ENCODE measurements at regions of chr6 and their contacts with region 1.

Region 1: DNA sequence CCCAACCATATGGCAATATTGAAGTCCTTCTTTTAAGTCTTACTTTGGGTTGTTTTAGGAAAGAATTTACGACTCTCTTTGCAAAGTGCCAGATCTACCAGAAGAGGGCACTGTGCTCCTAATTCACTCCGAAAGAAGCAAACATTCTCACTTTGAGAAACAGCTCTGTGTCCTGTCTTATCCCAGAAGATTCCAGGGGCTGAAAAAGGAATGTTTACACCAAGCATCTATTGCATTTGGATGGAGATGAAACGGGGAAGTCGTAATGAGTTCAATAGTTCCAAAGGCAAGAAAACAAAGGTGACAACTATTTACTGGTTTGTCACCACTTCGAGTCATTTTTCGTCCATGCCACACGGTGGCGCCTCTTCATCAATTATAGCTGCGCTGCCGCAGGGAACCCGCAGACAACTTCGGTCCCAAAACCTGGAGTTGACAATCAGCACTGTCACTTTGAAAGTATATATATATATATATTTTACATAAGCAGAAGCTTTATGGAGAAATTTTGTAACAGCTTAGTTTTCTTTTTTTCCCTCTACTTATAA is 121.6 kb downstream of the MOXD1 start:
- DNase-seq: peak; percentile 33 to 65
- ATAC-seq: peak; percentile 84 to 86; a peak in 5 of 6 replicates
- H3K4me3 ChIP-seq: peak overlapping the region; percentile 37
- H3K27ac ChIP-seq: no peak overlapping the region
- H3K4me1 ChIP-seq: no peaks in the 10 kb centered on the region
- CTCF ChIP-seq: peak; percentile 99
- EP300 ChIP-seq: no peak
- POLR2A ChIP-seq: no peak
- RAD21 ChIP-seq: peak; percentile 78 to 87

Region 2: DNA sequence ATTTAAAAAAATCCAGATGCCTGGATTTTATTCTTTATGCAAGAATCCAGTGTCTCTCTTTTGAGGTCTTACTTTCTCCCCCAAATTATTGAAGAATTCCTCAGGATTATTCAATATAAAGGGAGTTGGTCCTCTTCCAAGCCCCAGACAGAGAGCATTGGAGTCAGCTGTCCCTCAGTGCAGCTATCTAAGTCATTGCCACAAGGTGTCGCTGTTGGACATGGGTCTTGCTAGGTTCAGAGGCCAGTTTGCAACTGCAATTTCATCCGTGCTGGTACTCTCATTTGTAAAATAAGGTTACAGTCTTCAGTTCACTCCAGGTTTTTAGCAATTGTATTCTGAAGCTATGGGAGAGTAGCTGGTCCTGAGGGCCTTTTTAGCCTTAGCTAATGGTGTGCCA is 356.3 kb before region 1 on chr6:
- CTCF ChIA-PET with region 1: interaction called, 35 read pairs
- POLR2A ChIA-PET with region 1: no interaction called
- DNase-seq: peak in 1 of 2 experiments; percentile 78
- ATAC-seq: peak; percentile 59 to 80; a peak in 3 of 6 replicates
- H3K4me3 ChIP-seq: no peak overlapping the region
- H3K27ac ChIP-seq: no peak overlapping the region
- H3K4me1 ChIP-seq: 0 out of 3 replicates have a peak, but pooled peaks cover 3% of the 10 kb centered on the region
- CTCF ChIP-seq: peak; percentile 36
- EP300 ChIP-seq: no peak
- POLR2A ChIP-seq: no peak
- RAD21 ChIP-seq: peak; percentile 23 to 65; a peak in 2 of 5 replicates

Region 3: DNA sequence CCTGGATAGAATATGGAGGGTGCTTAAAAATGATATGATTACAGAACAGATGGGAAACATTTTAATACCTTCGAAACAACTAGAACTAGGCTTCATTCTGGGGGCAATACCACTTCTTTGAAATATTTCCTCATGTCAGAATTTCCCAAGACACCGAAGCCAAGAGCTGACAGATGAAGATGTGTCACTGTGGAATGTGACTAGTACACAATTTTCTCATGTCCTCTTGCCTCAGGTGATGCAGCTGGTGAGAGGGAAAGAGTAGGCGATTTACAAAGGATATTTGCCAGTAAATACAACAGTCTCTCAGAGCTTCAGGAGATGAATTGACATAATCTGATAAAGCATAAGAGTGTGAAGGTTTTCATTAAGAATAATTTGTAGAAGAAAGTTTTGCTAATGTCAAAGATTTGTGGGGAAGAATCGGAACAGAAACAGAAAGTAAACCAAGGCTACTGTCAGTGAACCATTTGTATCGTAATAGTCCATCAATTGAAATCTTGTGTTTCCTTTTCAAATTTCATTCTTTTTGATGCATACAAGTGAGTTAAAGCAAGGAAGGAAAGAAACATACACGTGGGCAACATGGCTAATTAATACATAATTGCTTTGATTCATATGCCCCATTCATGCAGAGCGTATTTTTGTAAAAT is 163.8 kb before region 1 on chr6:
- CTCF ChIA-PET with region 1: no interaction called
- POLR2A ChIA-PET with region 1: no interaction called
- DNase-seq: no peak
- ATAC-seq: no peak
- H3K4me3 ChIP-seq: no peak overlapping the region
- H3K27ac ChIP-seq: no peak overlapping the region
- H3K4me1 ChIP-seq: no peaks in the 10 kb centered on the region
- CTCF ChIP-seq: no peak
- EP300 ChIP-seq: no peak
- POLR2A ChIP-seq: no peak
- RAD21 ChIP-seq: no peak

Region 4: DNA sequence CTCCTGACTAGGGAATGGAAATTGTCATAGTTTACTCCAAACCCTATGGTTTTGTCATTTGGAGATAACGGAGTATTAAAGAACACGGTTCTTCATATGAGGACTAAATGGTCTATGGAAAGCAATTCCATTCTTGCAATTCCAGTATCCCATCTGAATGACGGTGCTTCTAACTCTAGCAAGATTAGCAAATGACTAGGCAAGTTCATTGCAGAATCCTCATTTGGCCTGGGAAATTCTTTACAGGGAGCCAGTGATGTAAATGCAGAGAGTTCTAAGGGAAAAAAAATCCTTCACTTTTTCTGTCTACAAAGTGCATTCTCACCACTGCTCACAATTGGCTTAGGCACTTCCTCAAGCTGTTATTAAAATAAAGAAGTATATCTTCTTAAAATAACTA is 10.1 kb after region 1 on chr6:
- CTCF ChIA-PET with region 1: interaction called, 44 read pairs
- POLR2A ChIA-PET with region 1: no interaction called
- DNase-seq: no peak
- ATAC-seq: no peak
- H3K4me3 ChIP-seq: no peak overlapping the region
- H3K27ac ChIP-seq: no peak overlapping the region
- H3K4me1 ChIP-seq: no peaks in the 10 kb centered on the region
- CTCF ChIP-seq: no peak
- EP300 ChIP-seq: no peak
- POLR2A ChIP-seq: no peak
- RAD21 ChIP-seq: no peak

Region 5: GRCh38 chr6:132405143-132405915 is 125.7 kb after region 1 on chr6:
- CTCF ChIA-PET with region 1: interaction called, 10 read pairs
- POLR2A ChIA-PET with region 1: no interaction called
- DNase-seq: no peak
- ATAC-seq: no peak
- H3K4me3 ChIP-seq: no peak overlapping the region
- H3K27ac ChIP-seq: no peak overlapping the region
- H3K4me1 ChIP-seq: peaks cover 11% of the 10 kb centered on the region
- CTCF ChIP-seq: no peak
- EP300 ChIP-seq: no peak
- POLR2A ChIP-seq: no peak
- RAD21 ChIP-seq: no peak

Region 6: GRCh38 chr6:132483779-132484679 is 204.4 kb after region 1 on chr6:
- CTCF ChIA-PET with region 1: interaction called, 136 read pairs
- POLR2A ChIA-PET with region 1: no interaction called
- DNase-seq: peak; percentile 36 to 56
- ATAC-seq: peak; percentile 64 to 79; a peak in 4 of 6 replicates
- H3K4me3 ChIP-seq: no peak overlapping the region
- H3K27ac ChIP-seq: no peak overlapping the region
- H3K4me1 ChIP-seq: peaks cover 5% of the 10 kb centered on the region; the same call in 2 of the 3 replicates
- CTCF ChIP-seq: peak; percentile 75
- EP300 ChIP-seq: no peak
- POLR2A ChIP-seq: no peak
- RAD21 ChIP-seq: peak; percentile 83 to 85

Measured in A549 (cell line).